ENCODE measurements at regions of chr5 and their contacts with region 1.

Region 1: DNA sequence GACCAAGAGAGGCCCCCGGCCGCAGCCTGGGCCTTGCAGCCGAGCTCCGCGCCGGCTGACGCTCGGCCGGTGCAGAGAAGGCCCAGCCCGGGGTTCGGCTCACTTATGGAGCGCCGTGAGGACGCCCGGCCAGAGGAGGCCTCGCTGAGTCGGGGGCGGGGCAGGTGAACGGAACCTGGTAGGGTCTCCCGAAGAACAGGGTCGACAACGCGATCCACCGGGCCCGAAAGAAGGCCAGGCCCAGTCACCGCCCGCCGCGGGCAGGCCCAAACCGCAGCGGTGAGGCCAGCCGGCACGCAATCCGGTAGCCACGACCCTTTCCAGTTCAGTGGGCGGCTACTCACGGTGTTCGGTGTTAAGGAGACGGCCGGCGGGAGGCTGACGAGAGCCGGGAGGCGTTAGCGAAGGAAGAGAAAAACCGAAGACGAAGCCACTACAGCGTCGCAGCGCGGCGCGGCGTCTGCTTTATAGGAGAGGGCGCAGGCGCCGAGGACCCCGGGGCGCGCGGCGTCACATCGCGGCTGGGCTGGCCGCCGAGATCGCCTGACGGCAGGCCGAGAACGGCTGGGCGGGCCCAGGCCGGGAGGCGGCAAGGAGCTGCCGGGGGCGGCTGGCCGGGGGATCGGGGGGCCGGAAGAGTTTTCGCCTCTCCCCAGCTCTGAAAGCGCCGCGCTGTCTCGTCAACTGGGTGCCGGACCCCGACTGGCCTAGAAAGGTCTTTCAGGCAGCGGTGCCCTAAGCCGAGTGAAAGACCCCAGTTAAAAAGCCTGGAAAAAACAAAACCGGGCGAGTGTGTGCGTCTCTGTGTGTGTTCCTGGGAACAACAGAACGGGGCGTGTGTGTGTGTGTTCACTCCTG is at the start of gene SKP1:
- DNase-seq: peak; percentile 89
- H3K4me3 Mint-ChIP-seq: peak within 1 kb of the TSS; percentile 97
- H3K27ac Mint-ChIP-seq: peak within 1 kb of the TSS; percentile 97
- H3K4me1 Mint-ChIP-seq: peaks cover 28% of the 10 kb centered on the region
- H3K27me3 Mint-ChIP-seq: no peaks in the 10 kb centered on the region
- CTCF ChIP-seq: no peak
- total RNA-seq, gene SKP1: 415 and 488 TPM in 2 replicates

Region 2: GRCh38 chr5:133384120-133384855 is 792.5 kb before region 1 on chr5:
- CTCF ChIA-PET with region 1: no interaction called
- POLR2A ChIA-PET with region 1: no interaction called
- intact Hi-C with region 1: no loop called
- DNase-seq: no peak
- H3K4me3 Mint-ChIP-seq: no peak overlapping the region
- H3K27ac Mint-ChIP-seq: no peak overlapping the region
- H3K4me1 Mint-ChIP-seq: no peaks in the 10 kb centered on the region
- H3K27me3 Mint-ChIP-seq: no peaks in the 10 kb centered on the region
- CTCF ChIP-seq: no peak

Region 3: DNA sequence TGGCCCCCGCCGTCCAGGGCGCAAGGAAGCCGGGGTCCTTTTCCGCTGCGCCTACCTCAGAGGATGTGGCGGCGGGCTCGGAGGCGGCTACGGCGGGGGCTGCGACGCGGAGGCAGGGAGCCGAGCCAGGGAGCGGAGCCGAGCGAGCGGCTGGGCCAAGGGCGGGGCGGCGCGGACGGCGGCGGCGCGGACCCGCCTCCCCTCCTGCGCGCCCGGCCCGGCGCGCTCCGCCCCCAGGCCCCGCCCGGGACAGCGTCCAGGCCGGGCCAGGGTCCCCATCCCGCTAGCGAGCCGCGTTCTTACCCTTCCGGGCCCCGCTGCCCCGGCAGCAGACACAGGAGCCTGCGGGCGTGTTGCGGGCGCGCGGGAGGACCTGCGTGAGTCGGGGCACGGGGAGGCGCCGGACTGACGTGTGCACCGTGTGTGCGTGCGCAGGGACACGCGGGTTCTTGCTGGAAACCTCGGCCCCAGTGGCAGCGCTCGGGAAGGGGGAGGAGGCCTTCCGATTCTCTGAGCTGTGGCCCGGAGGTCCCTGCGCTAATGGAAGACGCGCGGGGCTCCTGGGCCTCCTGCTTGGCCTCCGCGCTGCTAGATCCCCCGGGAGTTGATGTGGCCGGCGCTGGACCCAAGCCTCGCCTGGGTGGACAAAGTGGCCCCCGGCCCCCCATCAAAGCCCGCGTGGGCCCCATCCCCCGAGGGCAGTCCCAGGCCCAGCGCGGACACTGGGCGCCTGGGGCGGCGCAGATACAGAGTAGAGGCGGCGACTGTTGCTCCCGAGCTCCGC is 172.0 kb before region 1 on chr5 and contains the start of gene VDAC1:
- CTCF ChIA-PET with region 1: no interaction called
- POLR2A ChIA-PET with region 1: interaction called, 37 read pairs
- intact Hi-C with region 1: no loop called
- DNase-seq: peak; percentile 82
- H3K4me3 Mint-ChIP-seq: peak within 1 kb of the TSS; percentile 90
- H3K27ac Mint-ChIP-seq: peak within 1 kb of the TSS; percentile 95
- H3K4me1 Mint-ChIP-seq: peaks cover 40% of the 10 kb centered on the region
- H3K27me3 Mint-ChIP-seq: no peaks in the 10 kb centered on the region
- CTCF ChIP-seq: no peak
- total RNA-seq, gene VDAC1: 262 and 334 TPM in 2 replicates

Region 4: GRCh38 chr5:134140530-134141201 is 36.1 kb before region 1 on chr5:
- CTCF ChIA-PET with region 1: interaction called, 3 read pairs
- POLR2A ChIA-PET with region 1: interaction called, 18 read pairs
- intact Hi-C with region 1: no loop called
- DNase-seq: peak; percentile 96
- H3K4me3 Mint-ChIP-seq: no peak overlapping the region
- H3K27ac Mint-ChIP-seq: peak overlapping the region; percentile 60
- H3K4me1 Mint-ChIP-seq: peaks cover 23% of the 10 kb centered on the region
- H3K27me3 Mint-ChIP-seq: no peaks in the 10 kb centered on the region
- CTCF ChIP-seq: peak; percentile 93

Region 5: GRCh38 chr5:134204575-134204974 is 27.8 kb after region 1 on chr5:
- CTCF ChIA-PET with region 1: interaction called, 3 read pairs
- POLR2A ChIA-PET with region 1: interaction called, 12 read pairs
- intact Hi-C with region 1: no loop called
- DNase-seq: no peak
- H3K4me3 Mint-ChIP-seq: no peak overlapping the region
- H3K27ac Mint-ChIP-seq: no peak overlapping the region
- H3K4me1 Mint-ChIP-seq: peaks cover 23% of the 10 kb centered on the region
- H3K27me3 Mint-ChIP-seq: no peaks in the 10 kb centered on the region
- CTCF ChIP-seq: no peak

Region 6: GRCh38 chr5:134240421-134240962 is 63.8 kb after region 1 on chr5:
- CTCF ChIA-PET with region 1: interaction called, 4 read pairs
- POLR2A ChIA-PET with region 1: interaction called, 68 read pairs
- intact Hi-C with region 1: no loop called
- DNase-seq: no peak
- H3K4me3 Mint-ChIP-seq: no peak overlapping the region
- H3K27ac Mint-ChIP-seq: no peak overlapping the region
- H3K4me1 Mint-ChIP-seq: peaks cover 7% of the 10 kb centered on the region
- H3K27me3 Mint-ChIP-seq: no peaks in the 10 kb centered on the region
- CTCF ChIP-seq: no peak

Region 7: DNA sequence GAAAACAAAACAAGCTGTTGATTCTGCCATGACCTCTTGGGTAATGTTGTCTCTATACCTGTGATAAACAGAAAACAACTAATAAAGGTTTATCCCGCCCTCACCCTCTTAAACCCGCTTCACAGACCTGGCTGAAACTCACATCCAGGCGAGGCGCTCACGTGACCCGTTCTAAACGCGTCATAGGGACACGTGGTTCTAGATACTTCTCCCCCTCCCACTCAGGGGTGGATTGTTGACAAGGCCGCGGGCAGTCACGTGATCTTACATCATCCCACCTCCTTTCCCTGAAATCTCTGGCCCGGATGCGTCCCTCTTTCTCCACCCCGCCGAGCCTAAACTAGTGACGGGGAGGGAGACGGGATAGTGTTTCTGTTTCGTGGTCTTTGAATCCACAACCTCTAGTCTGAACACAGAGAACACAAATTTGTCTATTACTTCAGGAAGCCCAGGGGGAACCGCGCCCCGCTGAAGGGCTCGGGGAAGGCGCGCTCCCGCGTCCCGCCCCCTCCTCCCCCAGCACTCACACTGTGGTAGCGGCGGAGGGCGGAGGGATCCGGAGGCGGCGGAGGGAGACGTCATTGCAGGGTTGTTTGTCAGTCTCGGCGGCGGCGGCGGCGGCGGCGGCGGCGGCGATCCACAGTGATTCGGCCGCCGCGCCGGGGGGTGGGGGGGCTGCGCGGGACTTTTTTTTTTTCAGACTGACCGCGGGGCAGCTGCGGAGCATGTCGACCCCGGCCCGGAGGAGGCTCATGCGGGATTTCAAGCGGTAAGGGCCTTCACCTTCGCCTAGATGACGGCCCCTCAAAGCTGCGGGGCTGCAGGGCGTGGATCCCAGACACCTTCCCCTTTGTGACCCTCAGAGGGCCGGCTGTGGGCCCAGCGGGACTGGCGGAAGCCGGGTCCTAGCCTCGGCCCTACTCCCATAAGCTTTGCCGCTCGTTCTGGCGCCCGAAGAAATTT is 194.4 kb after region 1 on chr5 and contains the start of gene UBE2B:
- CTCF ChIA-PET with region 1: interaction called, 3 read pairs
- POLR2A ChIA-PET with region 1: interaction called, 40 read pairs
- intact Hi-C with region 1: no loop called
- DNase-seq: peak; percentile 100
- H3K4me3 Mint-ChIP-seq: peak within 1 kb of the TSS; percentile 99
- H3K27ac Mint-ChIP-seq: peak within 1 kb of the TSS; percentile 99
- H3K4me1 Mint-ChIP-seq: peaks cover 28% of the 10 kb centered on the region
- H3K27me3 Mint-ChIP-seq: no peaks in the 10 kb centered on the region
- CTCF ChIP-seq: no peak
- total RNA-seq, gene UBE2B: 178 and 186 TPM in 2 replicates

Region 8: DNA sequence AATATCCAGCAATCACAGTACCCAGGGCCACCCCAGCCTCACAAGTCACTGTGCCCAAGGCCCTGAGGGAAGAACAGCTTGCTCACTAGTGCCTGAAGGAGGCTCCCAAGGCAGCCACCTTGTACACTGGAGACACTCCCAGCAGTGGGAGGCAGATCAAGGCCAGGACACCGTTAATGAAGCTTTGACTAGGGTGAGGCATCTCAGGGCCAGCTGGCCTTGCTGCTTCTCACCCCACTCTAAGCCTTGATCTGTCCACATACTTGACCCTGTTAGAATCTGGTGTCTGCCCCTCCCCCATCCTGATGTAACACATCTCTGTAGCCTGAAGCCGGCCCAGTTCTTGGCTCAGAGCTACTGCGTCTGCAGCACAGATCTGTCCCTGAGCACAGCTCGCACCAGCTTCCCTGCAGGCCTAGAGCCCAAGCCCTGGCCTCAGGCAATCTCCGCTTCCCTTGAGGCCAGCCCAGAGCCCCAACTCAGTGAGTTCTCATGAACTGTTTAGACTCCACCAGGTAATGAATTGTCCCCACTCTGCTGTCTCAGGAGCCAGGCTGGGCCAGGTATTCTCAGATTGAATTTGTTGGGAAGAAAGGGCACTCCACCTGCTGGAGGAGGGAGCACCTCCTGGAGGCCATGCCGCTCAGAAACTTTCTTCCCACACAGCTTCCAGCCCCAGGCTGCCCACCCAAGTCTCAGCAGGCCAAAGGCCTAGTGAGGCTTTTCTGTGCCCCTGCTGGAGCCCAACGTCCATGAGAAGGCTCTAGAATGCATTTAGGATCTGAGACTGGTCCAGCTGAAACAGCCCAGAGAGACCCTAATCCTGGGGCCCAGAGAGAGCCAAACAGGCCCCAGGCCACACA is 335.3 kb after region 1 on chr5:
- CTCF ChIA-PET with region 1: no interaction called
- POLR2A ChIA-PET with region 1: interaction called, 13 read pairs
- intact Hi-C with region 1: no loop called
- DNase-seq: peak; percentile 95
- H3K4me3 Mint-ChIP-seq: peak overlapping the region; percentile 48
- H3K27ac Mint-ChIP-seq: peak overlapping the region; percentile 82
- H3K4me1 Mint-ChIP-seq: peaks cover 54% of the 10 kb centered on the region
- H3K27me3 Mint-ChIP-seq: no peaks in the 10 kb centered on the region
- CTCF ChIP-seq: peak; percentile 61